ENCODE measurements at regions of chr11 and their contacts with region 1.

Region 1: GRCh38 chr11:132561937-132562336 is 970.4 kb downstream of the OPCML start:
- DNase-seq: no peak
- ATAC-seq: no peak
- H3K4me3 ChIP-seq: no peak overlapping the region
- H3K27ac ChIP-seq: no peak overlapping the region
- H3K4me1 ChIP-seq: no peaks in the 10 kb centered on the region
- H3K27me3 ChIP-seq: no peaks in the 10 kb centered on the region
- CTCF ChIP-seq: no peak

Region 2: DNA sequence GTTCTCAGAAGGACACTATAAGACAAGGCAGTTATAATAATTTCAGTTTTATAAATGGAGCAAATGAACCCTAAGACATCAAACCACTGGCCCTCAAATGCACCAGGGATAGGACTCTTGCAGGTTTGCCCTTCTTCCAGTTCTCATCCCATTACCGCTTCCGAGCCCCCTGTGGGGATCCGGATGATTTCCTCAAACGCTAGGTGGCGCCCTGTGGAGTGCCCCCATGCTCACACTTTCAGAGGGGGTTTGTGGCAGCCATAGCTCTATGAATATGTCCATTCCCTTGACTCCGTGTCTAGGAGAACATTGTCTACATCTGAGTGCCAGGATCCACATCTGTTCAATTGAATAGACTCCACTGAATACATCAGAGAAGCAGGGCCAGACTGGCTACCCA is 375.2 kb before region 1 on chr11:
- CTCF ChIA-PET with region 1: no interaction called
- POLR2A ChIA-PET with region 1: interaction called, 19 read pairs
- in situ Hi-C with region 1: no loop called
- intact Hi-C with region 1: no loop called
- DNase-seq: no peak
- ATAC-seq: no peak
- H3K4me3 ChIP-seq: no peak overlapping the region
- H3K27ac ChIP-seq: no peak overlapping the region
- H3K4me1 ChIP-seq: no peaks in the 10 kb centered on the region
- H3K27me3 ChIP-seq: no peaks in the 10 kb centered on the region
- CTCF ChIP-seq: peak; percentile 59

Region 3: DNA sequence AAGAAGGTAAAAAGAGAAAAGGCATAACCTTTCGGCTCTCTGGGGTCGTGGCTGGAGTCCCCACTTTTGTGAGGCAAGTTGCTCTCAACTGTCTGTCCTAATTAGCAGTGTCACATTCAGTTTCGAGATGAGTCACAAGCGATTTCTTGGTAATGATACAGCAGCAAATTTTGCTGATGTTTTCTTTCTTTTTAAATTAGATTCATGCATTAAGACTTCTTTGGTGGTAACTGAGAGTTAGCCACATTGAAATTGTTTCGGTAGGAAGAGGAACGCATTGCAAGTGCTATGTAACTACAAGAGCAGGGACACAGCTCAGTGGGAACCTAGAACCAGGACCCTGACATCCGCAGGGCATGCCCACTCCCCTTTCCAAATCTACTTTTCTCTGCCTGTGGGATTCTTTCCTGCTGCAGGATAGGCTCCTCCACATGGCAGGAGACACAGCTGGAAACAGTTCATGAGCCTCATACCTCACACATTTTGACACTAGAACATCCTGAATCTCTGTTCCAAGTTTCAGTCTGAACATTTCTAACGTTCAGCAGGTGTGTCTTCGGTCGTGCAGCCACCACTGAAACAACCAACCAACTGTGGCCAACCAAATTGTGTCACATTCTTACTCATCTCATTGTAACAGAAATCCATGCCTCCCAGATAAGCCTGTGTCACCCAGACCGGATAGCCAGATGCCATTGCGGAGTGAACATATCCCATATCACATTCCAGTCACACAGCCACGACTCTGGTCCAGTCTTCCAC is 203.9 kb before region 1 on chr11:
- CTCF ChIA-PET with region 1: no interaction called
- POLR2A ChIA-PET with region 1: no interaction called
- in situ Hi-C with region 1: no loop called
- intact Hi-C with region 1: no loop called
- DNase-seq: no peak
- ATAC-seq: no peak
- H3K4me3 ChIP-seq: no peak overlapping the region
- H3K27ac ChIP-seq: no peak overlapping the region
- H3K4me1 ChIP-seq: no peaks in the 10 kb centered on the region
- H3K27me3 ChIP-seq: no peaks in the 10 kb centered on the region
- CTCF ChIP-seq: no peak

Region 4: DNA sequence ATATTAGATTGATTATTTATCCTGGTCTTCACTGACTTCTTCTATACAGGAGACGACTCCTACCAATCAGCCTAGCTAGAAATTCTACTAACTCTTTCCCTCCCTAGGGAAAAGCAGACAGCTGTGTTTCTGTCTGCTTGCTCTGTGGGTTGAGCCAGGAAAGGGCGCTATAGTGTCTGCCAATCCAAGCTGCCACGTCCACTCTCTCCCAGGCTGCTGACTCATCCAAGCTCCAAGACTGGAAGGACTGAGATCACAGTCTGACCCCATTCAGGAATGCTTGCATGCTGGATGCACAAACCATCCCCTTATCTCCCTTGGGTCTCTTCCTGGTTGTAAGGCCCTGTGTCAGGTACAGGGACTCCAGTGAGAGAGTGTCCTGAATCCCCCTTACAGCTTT is 14.8 kb after region 1 on chr11:
- CTCF ChIA-PET with region 1: interaction called, 11 read pairs
- POLR2A ChIA-PET with region 1: no interaction called
- in situ Hi-C with region 1: no loop called
- intact Hi-C with region 1: no loop called
- DNase-seq: no peak
- ATAC-seq: no peak
- H3K4me3 ChIP-seq: no peak overlapping the region
- H3K27ac ChIP-seq: no peak overlapping the region
- H3K4me1 ChIP-seq: no peaks in the 10 kb centered on the region
- H3K27me3 ChIP-seq: no peaks in the 10 kb centered on the region
- CTCF ChIP-seq: no peak

Region 5: GRCh38 chr11:133118563-133119268 is 556.8 kb after region 1 on chr11:
- CTCF ChIA-PET with region 1: no interaction called
- POLR2A ChIA-PET with region 1: no interaction called
- in situ Hi-C with region 1: no loop called
- intact Hi-C with region 1: no loop called
- DNase-seq: no peak
- ATAC-seq: no peak
- H3K4me3 ChIP-seq: no peak overlapping the region
- H3K27ac ChIP-seq: no peak overlapping the region
- H3K4me1 ChIP-seq: no peaks in the 10 kb centered on the region
- H3K27me3 ChIP-seq: peaks cover 2% of the 10 kb centered on the region; the same call in 1 of the 2 replicates
- CTCF ChIP-seq: no peak